ENCODE measurements at regions of chr22 and their contacts with region 1.

Region 1: DNA sequence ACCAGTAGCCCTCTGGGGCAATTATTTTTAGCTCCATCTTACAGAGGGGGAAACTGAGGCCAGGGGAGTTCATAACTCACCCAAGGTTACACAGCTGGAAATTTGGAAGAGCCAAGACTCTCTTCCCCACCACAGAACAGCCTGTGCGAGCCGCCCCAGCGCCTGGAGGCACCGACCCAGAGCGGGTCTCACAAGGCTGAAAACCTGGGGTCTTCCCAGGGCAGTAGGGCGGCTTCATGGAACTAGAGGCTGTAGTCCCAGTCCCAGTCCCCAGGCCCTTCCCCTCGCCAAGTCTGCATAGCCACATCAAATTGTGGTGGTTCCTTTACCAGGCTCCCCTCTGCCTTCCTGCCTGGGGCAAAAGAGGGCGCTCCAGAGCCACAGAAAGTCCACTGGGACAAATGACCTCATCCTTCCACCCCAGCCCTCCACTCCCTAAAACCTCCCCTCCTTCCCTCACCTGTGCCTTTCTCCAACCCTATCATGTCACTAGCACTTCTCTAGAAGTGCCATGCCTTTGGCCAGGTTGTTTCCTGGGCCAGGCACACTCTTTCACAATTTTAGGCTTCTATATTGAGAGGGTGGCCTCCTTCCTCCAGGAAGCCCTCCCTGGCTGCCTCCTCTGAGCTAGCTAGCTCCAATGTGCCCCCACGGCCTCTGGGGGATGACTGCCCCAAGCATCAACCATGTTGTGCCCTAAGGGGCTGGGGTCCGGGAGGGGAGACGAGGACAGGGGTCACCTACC is 15.2 kb upstream of the CDC42EP1 start:
- DNase-seq: peak; percentile 77 to 87
- H3K4me3 ChIP-seq: no peak overlapping the region
- H3K27ac ChIP-seq: 0 out of 2 replicates have a peak overlapping the region, but pooled peaks have one; percentile 19
- H3K4me1 ChIP-seq: peaks cover 81% of the 10 kb centered on the region
- H3K27me3 ChIP-seq: no peaks in the 10 kb centered on the region
- CTCF ChIP-seq: peak; percentile 81

Region 2: DNA sequence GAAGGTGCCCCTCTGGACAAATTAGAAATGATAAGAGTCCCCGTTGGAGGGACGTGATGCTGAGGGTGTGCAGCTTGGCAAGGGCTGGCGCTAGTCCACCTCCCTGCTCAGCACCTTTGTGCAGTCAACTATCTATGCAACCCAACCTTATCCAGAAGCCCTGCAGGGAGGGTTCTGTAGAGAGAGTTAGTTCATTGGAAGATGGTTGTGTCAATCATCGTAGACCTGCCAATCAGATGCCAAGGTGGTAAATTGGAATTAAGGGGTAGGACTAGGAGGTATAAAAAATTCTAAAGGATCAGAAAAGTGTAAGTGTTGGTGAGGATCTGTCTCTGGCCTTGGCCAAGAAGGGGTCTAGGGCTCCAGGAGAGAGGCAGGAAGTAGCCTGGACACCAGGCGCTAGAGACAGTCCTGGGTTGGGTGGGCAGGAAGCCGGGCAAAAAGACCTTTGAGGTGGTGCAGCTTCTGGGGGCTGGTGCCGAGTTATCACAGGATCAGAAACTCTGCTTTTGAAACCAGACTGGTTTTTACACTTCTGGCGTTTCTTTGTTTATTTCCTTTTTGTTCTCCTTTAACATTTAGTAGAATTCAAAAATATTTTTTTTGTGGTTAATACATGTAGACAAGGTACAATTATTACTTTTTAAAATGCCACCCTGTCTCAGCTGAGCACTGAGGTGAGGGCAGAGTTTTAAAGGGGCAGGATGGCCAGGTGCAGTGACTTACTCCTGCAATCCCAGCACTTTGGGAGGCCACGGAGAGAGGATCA is 358.7 kb before region 1 on chr22:
- CTCF ChIA-PET with region 1: no interaction called
- POLR2A ChIA-PET with region 1: no interaction called
- intact Hi-C with region 1: loop called (anchors 10 kb)
- DNase-seq: peak; percentile 71 to 80
- H3K4me3 ChIP-seq: peak overlapping the region; percentile 65
- H3K27ac ChIP-seq: peak overlapping the region; percentile 94
- H3K4me1 ChIP-seq: peaks cover 52% of the 10 kb centered on the region
- H3K27me3 ChIP-seq: no peaks in the 10 kb centered on the region
- CTCF ChIP-seq: no peak

Region 3: GRCh38 chr22:37566903-37567820 is 22.0 kb after region 1 on chr22:
- CTCF ChIA-PET with region 1: interaction called, 52 read pairs
- POLR2A ChIA-PET with region 1: interaction called, 9 read pairs
- intact Hi-C with region 1: loop called (anchors 1 kb)
- DNase-seq: peak; percentile 93 to 98
- H3K4me3 ChIP-seq: no peak overlapping the region
- H3K27ac ChIP-seq: peak overlapping the region; percentile 81
- H3K4me1 ChIP-seq: peaks cover 91% of the 10 kb centered on the region
- H3K27me3 ChIP-seq: no peaks in the 10 kb centered on the region
- CTCF ChIP-seq: peak; percentile 99

Region 4: GRCh38 chr22:37581504-37581903 is 36.4 kb after region 1 on chr22:
- CTCF ChIA-PET with region 1: interaction called, 12 read pairs
- POLR2A ChIA-PET with region 1: interaction called, 16 read pairs
- intact Hi-C with region 1: no loop called
- DNase-seq: peak; percentile 69 to 70
- H3K4me3 ChIP-seq: no peak overlapping the region; the same call in 1 of the 2 replicates
- H3K27ac ChIP-seq: peak overlapping the region; percentile 52
- H3K4me1 ChIP-seq: peaks cover 15% of the 10 kb centered on the region
- H3K27me3 ChIP-seq: no peaks in the 10 kb centered on the region
- CTCF ChIP-seq: no peak

Region 5: DNA sequence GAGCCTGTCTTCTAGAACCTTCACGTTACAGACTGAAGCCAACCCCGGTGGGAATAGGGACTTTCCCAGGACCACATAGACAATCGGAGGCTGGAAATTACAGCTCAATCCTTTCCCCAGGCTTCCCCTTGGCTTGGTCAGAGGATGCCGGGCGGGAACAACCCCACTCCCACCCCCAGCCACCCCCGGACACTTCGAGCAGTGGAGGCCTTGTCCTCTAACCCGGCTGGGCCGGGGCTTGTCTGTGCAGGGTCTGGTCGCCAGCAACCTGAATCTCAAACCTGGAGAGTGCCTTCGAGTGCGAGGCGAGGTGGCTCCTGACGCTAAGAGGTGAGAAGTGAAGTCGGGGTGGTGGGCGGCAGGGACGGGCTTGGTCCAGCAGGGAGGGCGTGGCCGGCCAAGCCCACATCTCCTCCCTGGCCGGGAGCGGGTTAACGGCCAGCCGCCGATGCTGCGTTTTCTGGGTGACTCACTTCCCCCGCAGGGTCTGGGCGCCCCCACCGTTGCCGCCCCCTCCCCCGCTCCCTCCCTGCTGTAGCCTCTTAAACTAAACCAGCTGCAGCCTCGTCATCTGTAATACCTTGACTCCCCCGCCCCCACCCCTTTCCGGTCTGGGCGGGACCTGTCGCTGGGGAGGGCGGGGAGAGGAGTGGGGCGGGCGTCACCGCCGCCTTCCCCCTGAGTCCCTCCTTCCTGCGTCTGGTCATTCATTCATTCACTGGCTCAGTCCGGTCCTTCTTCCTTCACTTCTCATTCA is 131.8 kb after region 1 on chr22:
- CTCF ChIA-PET with region 1: no interaction called
- POLR2A ChIA-PET with region 1: no interaction called
- intact Hi-C with region 1: loop called (anchors 10 kb)
- DNase-seq: peak; percentile 88 to 93
- H3K4me3 ChIP-seq: peak overlapping the region; percentile 56
- H3K27ac ChIP-seq: peak overlapping the region; percentile 69
- H3K4me1 ChIP-seq: peaks cover 56% of the 10 kb centered on the region
- H3K27me3 ChIP-seq: no peaks in the 10 kb centered on the region
- CTCF ChIP-seq: no peak

Region 6: GRCh38 chr22:37807410-37808293 is 262.5 kb after region 1 on chr22 and contains the start of gene GCAT:
- CTCF ChIA-PET with region 1: interaction called, 3 read pairs
- POLR2A ChIA-PET with region 1: interaction called, 6 read pairs
- intact Hi-C with region 1: loop called (anchors 5 kb)
- DNase-seq: peak; percentile 96
- H3K4me3 ChIP-seq: peak within 1 kb of the TSS; percentile 100
- H3K27ac ChIP-seq: no peak within 1 kb of the TSS
- H3K4me1 ChIP-seq: peaks cover 18% of the 10 kb centered on the region
- H3K27me3 ChIP-seq: no peaks in the 10 kb centered on the region
- CTCF ChIP-seq: no peak
- total RNA-seq, gene GCAT: 32.3 and 37.7 TPM in 2 replicates

Region 7: GRCh38 chr22:38143036-38143697 is 598.0 kb after region 1 on chr22:
- CTCF ChIA-PET with region 1: no interaction called
- POLR2A ChIA-PET with region 1: interaction called, 15 read pairs
- intact Hi-C with region 1: no loop called
- DNase-seq: peak; percentile 88 to 98
- H3K4me3 ChIP-seq: no peak overlapping the region
- H3K27ac ChIP-seq: peak overlapping the region; percentile 82
- H3K4me1 ChIP-seq: peaks cover 57% of the 10 kb centered on the region
- H3K27me3 ChIP-seq: no peaks in the 10 kb centered on the region
- CTCF ChIP-seq: 0 out of 2 replicates have a peak, but pooled peaks have one; percentile 26